Right ventricle myocardium superior (tissue), 1 donor: ENCODE measurements at regions of chr2 and their contacts with region 1.

Region 1: GRCh38 chr2:113233593-113234550 is 44.8 kb downstream of the PAX8 start:
- DNase-seq: peak; percentile 46
- ATAC-seq: peak; percentile 28

Region 2: GRCh38 chr2:113192438-113193100 is 41.3 kb before region 1 on chr2:
- intact Hi-C with region 1: no loop called
- DNase-seq: no peak
- ATAC-seq: no peak

Region 3: DNA sequence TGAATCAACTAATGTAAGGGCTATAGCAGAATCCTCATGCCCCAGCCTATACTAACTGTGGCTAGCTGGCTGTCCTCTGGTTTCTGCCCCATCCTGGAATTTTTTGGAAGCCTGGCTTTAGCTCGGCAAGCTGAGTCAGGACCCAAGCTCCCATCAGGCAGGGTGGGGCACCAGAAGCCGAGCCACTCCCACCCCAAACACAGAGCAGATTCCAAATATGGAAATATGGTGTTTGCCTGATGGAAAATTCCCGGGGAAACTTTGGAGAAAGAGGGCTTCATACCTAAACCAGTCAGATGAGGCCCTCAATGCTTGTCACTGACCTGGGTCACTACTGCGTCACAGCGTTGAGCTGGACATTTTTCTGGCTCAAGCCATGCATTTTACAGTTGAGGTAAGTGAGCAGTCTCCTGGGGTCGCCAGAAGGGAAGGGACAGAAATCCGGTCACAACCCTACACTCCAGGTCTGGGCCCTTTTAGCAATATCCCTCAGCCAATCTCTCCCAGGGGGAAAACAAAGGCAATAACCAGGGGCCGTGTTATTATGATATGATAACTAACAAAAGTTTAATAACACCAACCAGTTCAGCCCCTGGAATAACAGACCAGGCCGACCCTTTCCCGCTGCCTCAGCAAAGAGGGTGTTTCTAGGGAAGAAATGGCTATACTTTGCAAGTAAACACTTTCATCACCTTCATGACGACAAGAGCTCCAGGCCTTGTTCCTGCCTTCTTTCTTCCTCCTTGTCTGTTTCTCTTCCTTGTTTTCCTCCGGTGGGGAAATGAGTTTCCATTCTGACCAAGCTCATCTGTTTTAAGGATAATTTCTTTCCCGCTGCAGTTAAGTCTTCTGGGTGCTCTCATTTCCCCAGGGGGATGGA is 22.4 kb before region 1 on chr2:
- intact Hi-C with region 1: loop called (anchors 2 kb)
- DNase-seq: peak; percentile 65
- ATAC-seq: peak; percentile 57